B cell (primary cell): ENCODE measurements at regions of chr3 and their contacts with region 1.

Region 1: DNA sequence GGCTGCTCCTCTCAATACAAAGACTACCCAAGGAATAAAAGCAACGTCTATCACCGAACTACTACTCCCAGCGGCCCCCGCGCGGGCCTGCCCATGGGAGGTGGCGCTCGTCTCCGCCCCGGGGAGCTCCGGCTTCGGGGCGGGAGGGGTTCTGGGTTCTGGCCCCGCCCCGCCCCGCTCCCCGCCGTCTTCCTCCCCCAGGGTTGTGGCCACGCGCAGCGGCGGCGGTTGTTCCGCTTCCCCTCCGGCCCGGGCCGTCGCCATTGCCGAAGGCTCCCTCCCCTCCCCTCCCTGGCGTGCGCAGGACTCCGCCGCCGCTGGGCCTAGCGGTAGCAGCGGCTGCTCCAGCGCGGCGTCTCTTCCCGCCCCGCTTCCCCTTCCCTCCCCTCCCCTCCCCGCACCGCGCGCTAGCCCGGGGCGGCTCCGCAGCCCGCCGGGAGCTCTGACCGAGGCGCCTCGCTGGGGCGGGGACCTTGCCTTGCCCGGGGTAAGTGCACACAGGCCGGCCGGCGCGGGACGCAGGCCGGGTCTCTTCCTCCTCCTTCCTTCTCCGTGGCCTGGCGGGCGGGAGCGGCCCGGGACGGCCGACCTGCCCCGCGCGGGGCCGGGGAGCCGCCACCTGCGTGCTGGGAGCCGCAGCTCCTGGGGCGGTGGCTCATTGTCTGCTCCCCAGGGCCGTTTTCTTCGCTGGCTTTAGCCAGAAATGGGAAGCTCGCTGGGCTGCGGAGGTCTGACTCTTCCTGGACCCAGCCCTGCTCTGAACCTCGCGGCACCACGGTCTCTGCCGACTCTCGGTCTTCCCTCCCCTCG is at the start of gene PAK2:
- DNase-seq: peak; percentile 94
- ATAC-seq: peak; percentile 92
- H3K4me3 ChIP-seq: peak within 1 kb of the TSS; percentile 45 to 97 (median 69)
- H3K4me3 Mint-ChIP-seq: peak within 1 kb of the TSS; percentile 100
- H3K27ac ChIP-seq: peak within 1 kb of the TSS; percentile 48 to 96
- H3K27ac Mint-ChIP-seq: peak within 1 kb of the TSS; percentile 98
- H3K4me1 ChIP-seq: peaks cover 21 to 26% of the 10 kb centered on the region in 2 donors
- H3K4me1 Mint-ChIP-seq: peaks cover 28% of the 10 kb centered on the region
- H3K27me3 ChIP-seq: no peaks in the 10 kb centered on the region
- H3K27me3 Mint-ChIP-seq: no peaks in the 10 kb centered on the region
- CTCF ChIP-seq: no peak
- total RNA-seq, gene PAK2: 81.7 and 97.7 TPM in 2 replicates

Region 2: GRCh38 chr3:196202516-196202970 is 537.3 kb before region 1 on chr3:
- CTCF ChIA-PET with region 1: no interaction called
- POLR2A ChIA-PET with region 1: no interaction called
- intact Hi-C with region 1: no loop called
- DNase-seq: peak; percentile 44
- ATAC-seq: peak; percentile 28
- H3K4me3 ChIP-seq: peak overlapping the region in 3 of 5 experiments; percentile 21 to 41 (median 25)
- H3K4me3 Mint-ChIP-seq: peak overlapping the region; percentile 67
- H3K27ac ChIP-seq: no peak overlapping the region
- H3K27ac Mint-ChIP-seq: peak overlapping the region; percentile 60
- H3K4me1 ChIP-seq: peaks cover 26 to 34% of the 10 kb centered on the region in 2 donors
- H3K4me1 Mint-ChIP-seq: peaks cover 37% of the 10 kb centered on the region
- H3K27me3 ChIP-seq: peaks cover 0 to 2% (median 0%) of the 10 kb centered on the region in 4 experiments
- H3K27me3 Mint-ChIP-seq: no peaks in the 10 kb centered on the region
- CTCF ChIP-seq: no peak

Region 3: GRCh38 chr3:196632046-196632751 is 107.7 kb before region 1 on chr3:
- CTCF ChIA-PET with region 1: interaction called, 3 read pairs
- POLR2A ChIA-PET with region 1: no interaction called
- intact Hi-C with region 1: loop called (anchors 2 kb)
- DNase-seq: peak; percentile 90
- ATAC-seq: peak; percentile 82
- H3K4me3 ChIP-seq: peak overlapping the region; percentile 60 to 78 (median 70)
- H3K4me3 Mint-ChIP-seq: peak overlapping the region; percentile 92
- H3K27ac ChIP-seq: peak overlapping the region; percentile 94 to 97
- H3K27ac Mint-ChIP-seq: peak overlapping the region; percentile 96
- H3K4me1 ChIP-seq: peaks cover 29 to 49% of the 10 kb centered on the region in 2 donors
- H3K4me1 Mint-ChIP-seq: peaks cover 52% of the 10 kb centered on the region
- H3K27me3 ChIP-seq: no peaks in the 10 kb centered on the region
- H3K27me3 Mint-ChIP-seq: no peaks in the 10 kb centered on the region
- CTCF ChIP-seq: peak; percentile 29

Region 4: GRCh38 chr3:196711838-196712513 is 27.9 kb before region 1 on chr3 and contains the starts of genes CEP19 and PIGX:
- CTCF ChIA-PET with region 1: no interaction called
- POLR2A ChIA-PET with region 1: interaction called, 16 read pairs
- intact Hi-C with region 1: loop called (anchors 1 kb)
- DNase-seq: peak; percentile 97
- ATAC-seq: peak; percentile 83
- H3K4me3 ChIP-seq: peak within 1 kb of the TSS; percentile 75 to 94 (median 87)
- H3K4me3 Mint-ChIP-seq: peak within 1 kb of the TSS; percentile 96
- H3K27ac ChIP-seq: peak within 1 kb of the TSS; percentile 91 to 96
- H3K27ac Mint-ChIP-seq: peak within 1 kb of the TSS; percentile 94
- H3K4me1 ChIP-seq: peaks cover 13 to 16% of the 10 kb centered on the region in 2 donors
- H3K4me1 Mint-ChIP-seq: peaks cover 14% of the 10 kb centered on the region
- H3K27me3 ChIP-seq: no peaks in the 10 kb centered on the region
- H3K27me3 Mint-ChIP-seq: no peaks in the 10 kb centered on the region
- CTCF ChIP-seq: no peak
- total RNA-seq, gene CEP19: 4.6 and 5.0 TPM in 2 replicates
- total RNA-seq, gene PIGX: 18.9 and 21.5 TPM in 2 replicates

Region 5: DNA sequence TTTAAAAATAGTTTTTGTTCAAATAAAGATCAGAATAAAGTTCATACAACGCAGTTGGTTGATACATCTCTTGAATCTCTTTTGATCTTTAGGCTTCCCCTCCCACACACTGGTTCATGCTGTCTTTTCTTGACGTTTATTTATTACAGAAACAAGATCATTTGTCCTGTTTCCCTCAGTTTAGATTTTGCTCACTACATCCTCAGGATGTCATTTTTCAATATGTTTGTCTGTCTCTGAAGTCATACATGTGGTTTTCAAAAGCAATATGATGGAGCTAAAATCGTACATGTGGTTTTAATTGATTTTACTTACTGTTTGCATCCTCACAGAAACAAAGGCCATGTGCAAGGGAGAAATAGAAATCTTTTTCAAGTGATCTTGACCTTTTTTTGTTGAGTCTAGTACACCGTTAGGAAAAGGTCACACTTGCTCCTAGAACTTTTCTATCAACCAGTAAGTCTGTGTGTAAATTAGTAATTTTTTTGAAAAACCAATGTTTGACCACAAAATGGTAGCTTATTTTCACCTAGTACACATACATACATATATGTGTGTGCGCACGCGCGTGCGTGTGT is 64.1 kb after region 1 on chr3:
- CTCF ChIA-PET with region 1: no interaction called
- POLR2A ChIA-PET with region 1: no interaction called
- intact Hi-C with region 1: loop called (anchors 10 kb)
- DNase-seq: no peak
- ATAC-seq: no peak
- H3K4me3 ChIP-seq: no peak overlapping the region
- H3K4me3 Mint-ChIP-seq: no peak overlapping the region
- H3K27ac ChIP-seq: no peak overlapping the region
- H3K27ac Mint-ChIP-seq: no peak overlapping the region
- H3K4me1 ChIP-seq: peaks cover 3 to 7% of the 10 kb centered on the region in 2 donors
- H3K4me1 Mint-ChIP-seq: peaks cover 15% of the 10 kb centered on the region
- H3K27me3 ChIP-seq: no peaks in the 10 kb centered on the region
- H3K27me3 Mint-ChIP-seq: no peaks in the 10 kb centered on the region
- CTCF ChIP-seq: no peak

Region 6: GRCh38 chr3:196867507-196868296 is 127.8 kb after region 1 on chr3 and contains the start of gene SENP5:
- CTCF ChIA-PET with region 1: interaction called, 4 read pairs
- POLR2A ChIA-PET with region 1: interaction called, 5 read pairs
- intact Hi-C with region 1: loop called (anchors 2 kb)
- DNase-seq: peak; percentile 93
- ATAC-seq: peak; percentile 97
- H3K4me3 ChIP-seq: peak within 1 kb of the TSS; percentile 63 to 89 (median 77)
- H3K4me3 Mint-ChIP-seq: peak within 1 kb of the TSS; percentile 96
- H3K27ac ChIP-seq: peak within 1 kb of the TSS; percentile 77 to 95
- H3K27ac Mint-ChIP-seq: peak within 1 kb of the TSS; percentile 95
- H3K4me1 ChIP-seq: peaks cover 14 to 19% of the 10 kb centered on the region in 2 donors
- H3K4me1 Mint-ChIP-seq: peaks cover 29% of the 10 kb centered on the region
- H3K27me3 ChIP-seq: no peaks in the 10 kb centered on the region
- H3K27me3 Mint-ChIP-seq: no peaks in the 10 kb centered on the region
- CTCF ChIP-seq: no peak
- total RNA-seq, gene SENP5: 51.5 and 58.4 TPM in 2 replicates

Region 7: GRCh38 chr3:196942226-196942914 is 202.5 kb after region 1 on chr3 and contains the start of gene NCBP2:
- CTCF ChIA-PET with region 1: interaction called, 4 read pairs
- POLR2A ChIA-PET with region 1: interaction called, 3 read pairs
- intact Hi-C with region 1: loop called (anchors 2 kb)
- DNase-seq: peak; percentile 99
- ATAC-seq: peak; percentile 91
- H3K4me3 ChIP-seq: peak within 1 kb of the TSS; percentile 83 to 99 (median 92)
- H3K4me3 Mint-ChIP-seq: peak within 1 kb of the TSS; percentile 98
- H3K27ac ChIP-seq: peak within 1 kb of the TSS; percentile 92 to 97
- H3K27ac Mint-ChIP-seq: peak within 1 kb of the TSS; percentile 99
- H3K4me1 ChIP-seq: peaks cover 29 to 35% of the 10 kb centered on the region in 2 donors
- H3K4me1 Mint-ChIP-seq: peaks cover 50% of the 10 kb centered on the region
- H3K27me3 ChIP-seq: no peaks in the 10 kb centered on the region
- H3K27me3 Mint-ChIP-seq: no peaks in the 10 kb centered on the region
- CTCF ChIP-seq: peak; percentile 77
- total RNA-seq, gene NCBP2: 93.4 and 95.0 TPM in 2 replicates